Right ventricle myocardium inferior (tissue), 1 donor: ENCODE measurements at regions of chr20 and their contacts with region 1.

Region 1: DNA sequence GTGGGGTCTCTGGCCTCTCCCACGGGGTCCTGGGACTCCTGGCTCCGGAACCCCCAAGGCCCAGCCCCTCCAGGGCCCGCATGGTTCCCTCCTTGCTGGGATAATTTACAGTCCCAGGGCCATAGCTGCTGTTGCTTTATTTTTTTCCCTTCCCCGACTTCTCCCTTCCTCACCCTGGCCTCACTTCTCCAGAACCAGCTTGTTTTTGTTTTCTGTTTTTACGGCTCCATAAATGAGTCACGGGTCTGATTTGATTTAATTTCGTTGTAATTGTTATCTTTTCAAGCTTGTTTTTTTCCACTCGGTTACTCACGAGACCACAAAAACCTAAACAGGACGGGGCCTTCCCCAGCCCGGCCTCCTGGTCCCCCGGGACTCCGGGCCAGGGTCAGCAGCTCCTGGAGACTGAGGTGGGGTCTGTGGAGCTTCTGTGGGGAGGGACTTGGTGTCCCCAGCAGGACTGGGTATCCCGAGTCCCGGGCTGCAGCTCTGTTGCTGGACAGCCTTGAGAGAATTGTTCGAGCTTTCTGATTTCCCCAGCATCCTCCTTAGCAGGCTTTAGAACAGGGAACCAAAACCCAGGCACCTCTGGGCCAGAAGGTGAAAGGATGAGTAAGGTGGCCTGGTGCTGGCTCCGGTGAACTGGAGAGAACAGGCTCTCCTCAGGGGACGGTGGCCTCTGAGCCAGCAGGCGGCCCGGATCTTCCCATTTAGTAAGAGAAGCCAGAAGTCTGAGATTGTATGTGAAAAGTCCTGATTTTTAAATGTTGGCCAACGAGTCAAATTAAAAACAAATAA is 94.9 kb downstream of the CEBPB start:
- DNase-seq: no peak
- ATAC-seq: no peak

Region 2: GRCh38 chr20:49888345-49888966 is 397.1 kb before region 1 on chr20:
- intact Hi-C with region 1: no loop called
- DNase-seq: peak; percentile 64
- ATAC-seq: no peak

Region 3: GRCh38 chr20:50303573-50304501 is 18.3 kb after region 1 on chr20:
- intact Hi-C with region 1: loop called (anchors 2 kb)
- DNase-seq: peak; percentile 93
- ATAC-seq: peak; percentile 44

Region 4: GRCh38 chr20:50460460-50461267 is 175.1 kb after region 1 on chr20:
- intact Hi-C with region 1: loop called (anchors 5 kb)
- DNase-seq: peak; percentile 94
- ATAC-seq: peak; percentile 93